ENCODE measurements at regions of chr3 and their contacts with region 1.

Region 1: GRCh38 chr3:186909078-186909853 is 21.1 kb upstream of the ST6GAL1 start:
- DNase-seq: peak; percentile 94
- H3K4me3 Mint-ChIP-seq: peak overlapping the region; percentile 63
- H3K27ac Mint-ChIP-seq: peak overlapping the region; percentile 93
- H3K4me1 Mint-ChIP-seq: peaks cover 25% of the 10 kb centered on the region
- H3K27me3 Mint-ChIP-seq: no peaks in the 10 kb centered on the region

Region 2: GRCh38 chr3:186882881-186883685 is 26.2 kb before region 1 on chr3:
- intact Hi-C with region 1: loop called (anchors 1 kb)
- DNase-seq: peak; percentile 80
- H3K4me3 Mint-ChIP-seq: peak overlapping the region; percentile 52
- H3K27ac Mint-ChIP-seq: peak overlapping the region; percentile 89
- H3K4me1 Mint-ChIP-seq: peaks cover 53% of the 10 kb centered on the region
- H3K27me3 Mint-ChIP-seq: no peaks in the 10 kb centered on the region